Motor neuron (in vitro differentiated cells): ENCODE measurements at regions of chr15 and their contacts with region 1.

Region 1: GRCh38 chr15:26620528-26621458 is 152.1 kb downstream of the GABRB3 start:
- ATAC-seq: peak in 5 of 8 experiments; percentile 91 to 95 (median 92)
- H3K4me3 ChIP-seq: no peak overlapping the region
- H3K27ac ChIP-seq: peak overlapping the region in 1 of 2 donors; percentile 6
- H3K4me1 ChIP-seq: peaks cover 26 to 35% of the 10 kb centered on the region in 2 donors

Region 2: GRCh38 chr15:26561896-26562295 is 58.9 kb before region 1 on chr15:
- in situ Hi-C with region 1: no loop called
- ATAC-seq: peak in 3 of 8 experiments; percentile 58 to 88 (median 85)
- H3K4me3 ChIP-seq: no peak overlapping the region
- H3K27ac ChIP-seq: no peak overlapping the region
- H3K4me1 ChIP-seq: no peaks in the 10 kb centered on the region

Region 3: DNA sequence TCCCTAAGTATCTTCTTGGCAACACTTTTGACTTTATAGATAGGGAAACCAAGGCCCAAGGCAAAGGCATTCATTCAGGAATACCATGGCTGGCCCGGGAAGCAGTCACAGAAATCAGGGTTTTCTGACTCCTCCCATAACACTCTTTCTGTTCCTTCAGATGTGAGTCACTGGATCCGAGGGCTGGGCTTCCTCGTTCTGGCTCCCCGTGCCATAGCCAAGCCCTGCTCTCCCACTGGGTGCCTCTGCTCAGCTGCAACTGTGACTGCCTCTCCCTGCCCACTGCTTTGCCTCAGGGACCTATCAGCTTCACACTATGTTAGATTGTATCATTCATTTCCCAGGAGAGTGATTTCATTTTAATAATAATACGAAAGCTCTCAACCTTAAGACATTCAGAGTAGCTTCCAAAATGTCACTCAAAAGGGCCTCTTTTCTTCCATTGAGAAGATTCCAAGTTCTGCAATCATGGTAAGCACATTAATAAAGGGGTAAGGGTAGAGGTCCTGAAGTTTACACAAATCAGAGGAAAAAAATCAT is 101.9 kb after region 1 on chr15:
- in situ Hi-C with region 1: loop called in 1 of 9 experiments (anchors 25 kb)
- ATAC-seq: peak in 5 of 8 experiments; percentile 18 to 53 (median 43)
- H3K4me3 ChIP-seq: no peak overlapping the region
- H3K27ac ChIP-seq: no peak overlapping the region
- H3K4me1 ChIP-seq: peaks cover 26 to 42% of the 10 kb centered on the region in 2 donors